Right ventricle myocardium inferior (tissue), 1 donor: ENCODE measurements at regions of chrX and their contacts with region 1.

Region 1: DNA sequence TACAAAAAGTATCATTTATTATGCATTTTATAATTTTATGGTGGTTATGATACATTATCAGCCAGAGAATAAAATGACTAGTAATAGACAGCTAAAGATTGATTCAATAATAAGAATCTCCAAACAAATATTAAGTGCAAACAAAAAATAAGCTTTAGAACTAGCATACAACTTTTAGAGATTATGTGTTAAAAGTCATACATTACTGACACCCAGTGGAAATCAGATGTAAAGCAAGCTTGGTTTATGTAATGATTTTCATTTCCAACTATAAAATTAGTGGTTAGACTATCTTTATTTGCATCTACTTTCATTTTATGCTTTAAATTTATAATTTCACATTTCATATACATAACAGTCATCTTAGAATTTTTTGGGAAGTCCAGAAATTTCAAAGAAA is 57.7 kb downstream of the IL13RA2 start:
- DNase-seq: no peak
- ATAC-seq: no peak

Region 2: DNA sequence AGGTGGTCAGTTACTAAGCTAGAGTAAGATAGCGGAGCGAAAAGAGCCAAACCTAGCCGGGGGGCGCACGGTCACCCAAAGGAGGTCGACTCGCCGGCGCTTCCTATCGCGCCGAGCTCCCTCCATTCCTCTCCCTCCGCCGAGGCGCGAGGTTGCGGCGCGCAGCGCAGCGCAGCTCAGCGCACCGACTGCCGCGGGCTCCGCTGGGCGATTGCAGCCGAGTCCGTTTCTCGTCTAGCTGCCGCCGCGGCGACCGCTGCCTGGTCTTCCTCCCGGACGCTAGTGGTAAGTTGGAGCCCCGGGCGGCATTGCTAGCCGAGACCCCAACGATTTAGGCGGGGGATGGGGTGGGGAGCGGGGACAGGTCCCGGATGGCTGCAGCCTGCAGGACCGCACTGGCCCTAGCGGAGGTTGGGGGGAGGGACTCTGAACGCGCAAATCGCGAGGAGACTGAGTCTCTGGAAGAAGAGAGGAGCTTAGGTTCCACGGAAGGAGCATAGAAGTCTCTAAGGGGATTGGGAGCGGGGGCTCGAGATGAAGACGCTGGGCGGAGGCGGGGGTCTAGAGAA is 375.3 kb before region 1 on chrX:
- intact Hi-C with region 1: no loop called
- DNase-seq: no peak
- ATAC-seq: no peak

Region 3: GRCh38 chrX:114626323-114626722 is 333.4 kb before region 1 on chrX:
- intact Hi-C with region 1: loop called (anchors 5 kb)
- DNase-seq: no peak
- ATAC-seq: no peak

Region 4: GRCh38 chrX:114774691-114775090 is 185.0 kb before region 1 on chrX:
- intact Hi-C with region 1: loop called (anchors 10 kb)
- DNase-seq: no peak
- ATAC-seq: no peak

Region 5: GRCh38 chrX:115098897-115099296 is 139.2 kb after region 1 on chrX:
- intact Hi-C with region 1: no loop called
- DNase-seq: no peak
- ATAC-seq: no peak